ENCODE measurements at regions of chr19 and their contacts with region 1.

Region 1: DNA sequence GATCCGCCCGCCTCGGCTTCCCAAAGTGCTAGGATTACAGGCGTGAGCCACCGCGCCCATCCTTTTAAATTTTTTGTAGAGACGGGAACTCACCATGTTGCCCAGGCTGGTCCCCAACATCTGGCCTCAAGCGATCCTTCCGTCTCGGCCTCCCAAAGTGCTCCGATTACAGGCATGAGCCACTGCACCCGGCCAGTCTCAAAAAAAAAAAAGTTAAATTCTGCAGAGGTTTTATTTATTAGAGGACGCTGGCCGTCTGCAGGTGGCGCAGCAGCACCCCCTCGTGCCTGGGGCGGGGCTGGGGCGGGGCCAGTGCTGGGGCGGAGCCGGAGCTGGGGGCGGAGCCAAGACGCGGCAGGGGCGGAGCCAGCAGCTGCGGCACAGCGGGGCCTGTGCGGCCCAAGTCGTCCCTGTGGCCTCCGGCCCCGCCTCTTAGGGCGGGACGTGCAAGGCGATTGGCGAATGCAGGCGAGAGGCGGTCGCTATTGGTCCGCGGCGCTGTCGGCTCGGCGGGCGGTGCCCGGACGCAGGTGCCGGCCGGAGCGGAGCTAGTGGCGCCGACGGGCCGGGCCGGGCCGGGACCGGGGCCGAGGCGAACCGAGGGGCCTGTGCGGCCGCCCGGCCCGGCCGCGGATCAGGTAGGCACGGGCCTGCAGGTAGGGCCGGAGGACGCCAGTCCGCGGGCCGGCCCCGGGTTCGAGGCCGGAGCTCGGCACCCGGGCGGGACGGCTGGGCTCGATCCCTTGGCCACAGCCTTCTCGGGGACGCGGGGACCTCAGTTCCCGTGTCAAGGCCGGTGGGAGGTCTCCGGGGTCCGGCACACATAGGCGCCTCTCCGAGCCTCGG is at the start of gene MARCHF2:
- DNase-seq: peak; percentile 91 to 98
- H3K4me3 ChIP-seq: peak within 1 kb of the TSS; percentile 94 to 96
- H3K27ac ChIP-seq: peak within 1 kb of the TSS; percentile 49 to 60
- H3K4me1 ChIP-seq: peaks cover 0 to 11% of the 10 kb centered on the region in 2 donors
- H3K27me3 ChIP-seq: no peaks in the 10 kb centered on the region
- CTCF ChIP-seq: peak; percentile 40 to 84 (median 75)
- total RNA-seq, gene MARCHF2: 151 TPM

Region 2: GRCh38 chr19:8307965-8308866 is 104.8 kb before region 1 on chr19 and contains the start of gene CD320:
- intact Hi-C with region 1: no loop called
- DNase-seq: peak; percentile 33 to 94
- H3K4me3 ChIP-seq: peak within 1 kb of the TSS; percentile 58 to 72
- H3K27ac ChIP-seq: peak within 1 kb of the TSS; percentile 50 to 59
- H3K4me1 ChIP-seq: peaks cover 4 to 11% of the 10 kb centered on the region in 2 donors
- H3K27me3 ChIP-seq: no peaks in the 10 kb centered on the region
- CTCF ChIP-seq: no peak
- total RNA-seq, gene CD320: 263 TPM

Region 3: DNA sequence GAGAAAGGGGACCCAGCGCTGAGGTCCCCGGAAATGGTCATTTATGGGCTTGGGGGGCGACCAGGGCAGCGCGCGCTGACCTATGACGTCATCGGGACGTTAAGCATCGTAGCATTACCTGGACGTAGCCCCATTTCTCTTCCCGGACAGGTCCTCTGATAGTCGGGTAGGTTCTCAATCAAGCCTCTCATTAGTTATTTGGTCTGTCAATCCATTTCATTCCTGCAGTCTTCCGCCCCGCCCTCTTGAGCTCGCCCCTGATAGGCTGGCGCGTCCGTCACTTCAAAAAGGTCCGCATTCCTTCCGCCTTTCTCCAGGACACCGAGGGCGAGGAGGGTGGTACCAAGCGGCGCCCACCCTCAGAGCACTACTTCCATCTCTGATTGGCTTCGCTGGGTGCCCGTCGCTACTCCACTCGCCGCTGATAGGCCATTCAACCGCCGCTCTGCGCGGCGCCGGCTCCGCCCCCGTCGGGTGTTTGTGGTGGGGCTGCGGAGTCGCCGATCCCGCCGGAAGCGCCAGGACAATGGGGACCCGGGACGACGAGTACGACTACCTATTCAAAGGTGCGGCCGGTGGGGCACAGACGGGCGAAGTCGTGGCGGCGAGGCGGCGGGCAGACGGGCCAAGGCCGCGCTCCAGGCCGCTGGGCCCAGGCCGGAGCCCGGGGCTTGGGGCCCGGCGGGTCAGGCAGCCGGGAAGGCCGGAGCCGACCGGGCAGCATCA is 23.0 kb before region 1 on chr19 and contains the start of gene RAB11B:
- intact Hi-C with region 1: loop called (anchors 1 kb)
- DNase-seq: peak; percentile 100
- H3K4me3 ChIP-seq: peak within 1 kb of the TSS; percentile 97 to 100
- H3K27ac ChIP-seq: peak within 1 kb of the TSS; percentile 100
- H3K4me1 ChIP-seq: peaks cover 18 to 42% of the 10 kb centered on the region in 2 donors
- H3K27me3 ChIP-seq: no peaks in the 10 kb centered on the region
- CTCF ChIP-seq: no peak
- total RNA-seq, gene RAB11B: 70.8 TPM

Region 4: GRCh38 chr19:8423817-8424223 is 10.8 kb after region 1 on chr19:
- intact Hi-C with region 1: loop called (anchors 1 kb)
- DNase-seq: peak; percentile 88 to 98
- H3K4me3 ChIP-seq: peak overlapping the region in 1 of 2 donors; percentile 23
- H3K27ac ChIP-seq: peak overlapping the region; percentile 81 to 92
- H3K4me1 ChIP-seq: peaks cover 0 to 17% of the 10 kb centered on the region in 2 donors
- H3K27me3 ChIP-seq: no peaks in the 10 kb centered on the region
- CTCF ChIP-seq: no peak

Region 5: DNA sequence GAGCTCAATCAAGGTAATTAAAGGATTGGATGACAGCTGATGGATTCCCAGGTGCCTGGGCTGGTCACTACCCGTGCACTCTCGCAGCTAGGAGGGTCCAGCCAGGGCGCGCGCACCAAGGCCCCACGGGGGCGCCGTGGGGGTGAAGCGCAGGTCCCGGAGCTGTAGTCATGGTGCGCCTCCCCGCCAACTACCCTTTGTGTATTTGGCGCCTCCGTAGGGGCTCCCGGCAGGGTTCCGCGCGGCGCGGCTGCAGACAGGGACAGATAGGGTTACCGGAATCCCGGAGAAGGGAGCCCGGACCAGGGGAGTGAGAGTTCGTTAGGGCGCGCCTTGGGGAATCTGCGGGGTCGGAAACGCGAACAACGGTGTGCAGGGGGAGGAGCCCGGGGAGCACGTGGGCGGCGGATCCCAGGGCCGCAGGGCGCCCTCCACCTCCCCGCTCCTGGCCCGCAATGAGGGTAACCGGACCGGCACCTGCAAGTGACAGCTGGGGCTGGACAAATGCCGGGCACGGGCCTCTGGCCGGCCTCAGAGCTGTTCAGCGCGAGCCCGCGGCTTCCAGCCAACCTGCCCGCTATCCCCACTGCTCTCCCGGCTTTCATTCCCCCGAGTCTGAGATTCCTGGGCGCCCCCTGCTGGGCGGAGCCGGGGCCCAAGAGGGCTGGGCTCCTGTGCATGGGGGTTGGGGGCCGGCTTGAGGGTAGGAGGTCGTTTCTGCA is 92.8 kb after region 1 on chr19:
- intact Hi-C with region 1: loop called (anchors 1 kb)
- DNase-seq: peak in 1 of 2 donors; percentile 87
- H3K4me3 ChIP-seq: peak overlapping the region; percentile 61 to 80
- H3K27ac ChIP-seq: no peak overlapping the region
- H3K4me1 ChIP-seq: peaks cover 7 to 10% of the 10 kb centered on the region in 2 donors
- H3K27me3 ChIP-seq: no peaks in the 10 kb centered on the region
- CTCF ChIP-seq: peak; percentile 73 to 91 (median 80)